MCF 10A (cell line): ENCODE measurements at regions of chr4 and their contacts with region 1.

Region 1: GRCh38 chr4:183261953-183262775 is 57.9 kb downstream of the CLDN22 start:
- DNase-seq: peak; percentile 84
- H3K4me3 Mint-ChIP-seq: no peak overlapping the region
- H3K27ac Mint-ChIP-seq: peak overlapping the region; percentile 52
- H3K4me1 Mint-ChIP-seq: peaks cover 5% of the 10 kb centered on the region
- H3K27me3 Mint-ChIP-seq: no peaks in the 10 kb centered on the region
- CTCF ChIP-seq: peak; percentile 68

Region 2: GRCh38 chr4:182786991-182787390 is 475.2 kb before region 1 on chr4:
- CTCF ChIA-PET with region 1: no interaction called
- POLR2A ChIA-PET with region 1: no interaction called
- intact Hi-C with region 1: no loop called
- DNase-seq: no peak
- H3K4me3 Mint-ChIP-seq: no peak overlapping the region
- H3K27ac Mint-ChIP-seq: no peak overlapping the region
- H3K4me1 Mint-ChIP-seq: no peaks in the 10 kb centered on the region
- H3K27me3 Mint-ChIP-seq: no peaks in the 10 kb centered on the region
- CTCF ChIP-seq: no peak

Region 3: GRCh38 chr4:182925298-182925738 is 336.8 kb before region 1 on chr4:
- CTCF ChIA-PET with region 1: interaction called, 28 read pairs
- POLR2A ChIA-PET with region 1: interaction called, 3 read pairs
- intact Hi-C with region 1: no loop called
- DNase-seq: peak; percentile 45
- H3K4me3 Mint-ChIP-seq: no peak overlapping the region
- H3K27ac Mint-ChIP-seq: no peak overlapping the region
- H3K4me1 Mint-ChIP-seq: no peaks in the 10 kb centered on the region
- H3K27me3 Mint-ChIP-seq: no peaks in the 10 kb centered on the region
- CTCF ChIP-seq: peak; percentile 34

Region 4: GRCh38 chr4:183080372-183081115 is 181.6 kb before region 1 on chr4:
- CTCF ChIA-PET with region 1: interaction called, 226 read pairs
- POLR2A ChIA-PET with region 1: no interaction called
- intact Hi-C with region 1: no loop called
- DNase-seq: no peak
- H3K4me3 Mint-ChIP-seq: no peak overlapping the region
- H3K27ac Mint-ChIP-seq: no peak overlapping the region
- H3K4me1 Mint-ChIP-seq: no peaks in the 10 kb centered on the region
- H3K27me3 Mint-ChIP-seq: no peaks in the 10 kb centered on the region
- CTCF ChIP-seq: no peak

Region 5: DNA sequence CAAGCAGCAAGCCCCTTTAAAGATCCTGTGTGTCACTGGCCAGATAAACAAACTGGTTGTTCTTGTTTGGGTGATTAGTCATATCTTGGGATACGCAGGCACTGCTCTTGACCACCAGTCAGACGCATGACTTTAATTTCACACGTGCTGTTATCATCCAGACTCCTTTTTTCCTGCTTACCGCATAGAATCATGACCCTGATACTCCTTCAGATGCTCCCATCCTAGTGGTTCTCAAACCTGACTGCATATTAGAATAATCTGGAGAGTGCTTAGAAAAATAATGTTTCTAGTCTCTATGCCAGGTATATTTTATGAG is 20.9 kb before region 1 on chr4:
- CTCF ChIA-PET with region 1: interaction called, 33 read pairs
- POLR2A ChIA-PET with region 1: no interaction called
- intact Hi-C with region 1: no loop called
- DNase-seq: peak; percentile 22
- H3K4me3 Mint-ChIP-seq: no peak overlapping the region
- H3K27ac Mint-ChIP-seq: no peak overlapping the region
- H3K4me1 Mint-ChIP-seq: peaks cover 8% of the 10 kb centered on the region
- H3K27me3 Mint-ChIP-seq: no peaks in the 10 kb centered on the region
- CTCF ChIP-seq: no peak

Region 6: DNA sequence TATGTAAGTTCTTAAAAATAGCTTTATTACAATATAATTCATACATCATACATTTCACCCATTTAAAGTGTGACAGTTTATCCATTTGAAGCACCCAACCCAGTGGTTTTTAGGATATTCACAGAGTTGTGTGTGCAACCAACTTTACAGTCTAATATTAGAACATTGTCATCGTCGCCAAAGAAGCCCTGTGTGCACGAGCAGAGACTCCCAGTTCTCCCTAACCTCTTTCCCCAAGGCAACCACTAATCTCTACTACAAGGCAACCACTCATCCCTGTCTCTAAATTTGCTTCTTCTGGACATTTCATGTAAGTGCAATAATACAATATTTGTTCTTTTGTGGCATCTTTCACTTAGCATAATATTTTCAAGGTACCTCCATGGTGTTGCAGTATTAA is 10.2 kb after region 1 on chr4:
- CTCF ChIA-PET with region 1: interaction called, 15 read pairs
- POLR2A ChIA-PET with region 1: no interaction called
- intact Hi-C with region 1: no loop called
- DNase-seq: no peak
- H3K4me3 Mint-ChIP-seq: no peak overlapping the region
- H3K27ac Mint-ChIP-seq: no peak overlapping the region
- H3K4me1 Mint-ChIP-seq: no peaks in the 10 kb centered on the region
- H3K27me3 Mint-ChIP-seq: no peaks in the 10 kb centered on the region
- CTCF ChIP-seq: no peak